Ascending aorta (tissue), 2 donors: ENCODE measurements at regions of chr15 and their contacts with region 1.

Region 1: GRCh38 chr15:78299101-78299930 is at the start of gene SKIC8:
- DNase-seq: peak; percentile 68 to 95
- H3K4me3 ChIP-seq: peak within 1 kb of the TSS; percentile 76 to 83
- H3K27ac ChIP-seq: peak within 1 kb of the TSS; percentile 72 to 74
- H3K4me1 ChIP-seq: peaks cover 0 to 3% of the 10 kb centered on the region in 2 donors
- H3K27me3 ChIP-seq: no peaks in the 10 kb centered on the region
- CTCF ChIP-seq: no peak
- total RNA-seq, gene SKIC8: 19.9 TPM

Region 2: DNA sequence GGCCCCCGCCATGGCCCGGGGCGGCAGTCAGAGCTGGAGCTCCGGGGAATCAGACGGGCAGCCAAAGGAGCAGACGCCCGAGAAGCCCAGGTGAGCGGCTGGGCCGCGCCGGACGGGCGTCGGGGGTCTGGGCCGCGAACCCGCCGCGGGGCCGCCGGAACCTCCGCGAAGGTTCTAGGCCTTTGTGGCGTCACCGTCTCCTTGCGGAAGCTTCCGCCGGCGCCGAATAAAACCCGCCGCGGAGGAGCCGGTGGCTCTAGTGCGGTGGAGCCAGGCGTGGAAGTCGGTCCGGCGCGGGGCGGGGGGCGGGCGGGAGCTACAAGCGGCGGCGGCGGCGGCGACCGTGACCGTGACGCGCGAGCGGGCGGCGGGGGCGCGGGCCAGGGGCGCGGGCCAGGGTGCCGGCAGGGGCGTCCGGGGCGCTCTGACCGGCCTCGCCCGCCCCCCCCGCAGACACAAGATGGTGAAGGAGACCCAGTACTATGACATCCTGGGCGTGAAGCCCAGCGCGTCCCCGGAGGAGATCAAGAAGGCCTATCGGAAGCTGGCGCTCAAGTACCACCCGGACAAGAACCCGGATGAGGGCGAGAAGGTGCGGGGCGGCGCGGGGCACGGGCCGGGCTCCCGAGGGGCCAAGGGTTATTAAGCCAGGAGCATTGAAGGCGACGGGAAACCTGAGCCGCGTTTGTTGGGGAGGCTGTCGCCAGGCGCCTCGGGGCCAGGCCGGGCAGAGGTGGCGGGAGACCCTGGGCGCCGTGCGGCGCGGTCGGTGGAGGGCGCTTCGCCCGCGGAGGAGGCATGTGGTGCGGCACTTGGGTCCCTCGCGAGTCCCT is 34.8 kb before region 1 on chr15 and contains the start of gene DNAJA4:
- intact Hi-C with region 1: loop called (anchors 1 kb)
- DNase-seq: peak in 1 of 2 donors; percentile 78
- H3K4me3 ChIP-seq: peak within 1 kb of the TSS; percentile 61 to 92
- H3K27ac ChIP-seq: peak within 1 kb of the TSS; percentile 44 to 75
- H3K4me1 ChIP-seq: peaks cover 8 to 10% of the 10 kb centered on the region in 2 donors
- H3K27me3 ChIP-seq: no peaks in the 10 kb centered on the region
- CTCF ChIP-seq: peak in 1 of 3 experiments; percentile 28
- total RNA-seq, gene DNAJA4: 3.5 TPM